BJ (cell line): ENCODE measurements at regions of chr5 and their contacts with region 1.

Region 1: GRCh38 chr5:76867827-76868693 is 18.2 kb downstream of the S100Z start:
- DNase-seq: peak; percentile 12
- H3K4me3 ChIP-seq: no peak overlapping the region
- H3K27me3 ChIP-seq: no peaks in the 10 kb centered on the region
- CTCF ChIP-seq: peak; percentile 77

Region 2: DNA sequence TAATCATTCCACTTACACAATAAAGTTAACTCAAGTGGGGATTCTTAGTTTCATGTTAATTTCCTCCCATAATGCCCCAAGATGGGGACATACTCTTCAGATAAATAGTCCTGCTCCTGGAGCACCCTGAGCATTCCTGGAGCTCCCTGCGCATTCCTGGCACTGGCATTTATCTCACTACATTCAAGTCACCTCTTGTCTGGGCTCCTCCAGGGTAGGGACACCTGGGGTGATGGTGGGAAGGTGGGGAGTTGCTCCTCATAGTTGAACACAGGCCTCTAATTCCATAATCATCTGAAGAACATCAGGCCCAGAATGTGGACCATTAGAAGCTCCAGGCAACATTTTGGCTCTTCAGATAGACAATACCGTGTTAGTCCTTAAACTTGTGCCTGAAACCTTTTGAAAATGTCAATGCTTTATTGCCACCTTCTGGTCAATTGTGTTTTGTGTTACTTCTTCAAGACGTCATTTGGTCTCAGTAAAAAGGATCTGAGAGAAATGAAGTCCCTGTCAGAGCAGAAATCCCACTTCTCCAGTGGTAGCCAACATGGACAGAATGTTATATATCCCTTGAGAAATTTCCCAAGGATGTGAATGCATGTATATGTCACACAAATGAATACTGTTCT is 148.0 kb after region 1 on chr5:
- CTCF ChIA-PET with region 1: interaction called, 38 read pairs
- POLR2A ChIA-PET with region 1: no interaction called
- DNase-seq: peak; percentile 4
- H3K4me3 ChIP-seq: no peak overlapping the region
- H3K27me3 ChIP-seq: peaks cover 7% of the 10 kb centered on the region; the same call in 1 of the 2 replicates
- CTCF ChIP-seq: peak; percentile 17; the same call in 1 of the 2 replicates